Endothelial cell of umbilical vein (primary cell): ENCODE measurements at regions of chr19 and their contacts with region 1.

Region 1: DNA sequence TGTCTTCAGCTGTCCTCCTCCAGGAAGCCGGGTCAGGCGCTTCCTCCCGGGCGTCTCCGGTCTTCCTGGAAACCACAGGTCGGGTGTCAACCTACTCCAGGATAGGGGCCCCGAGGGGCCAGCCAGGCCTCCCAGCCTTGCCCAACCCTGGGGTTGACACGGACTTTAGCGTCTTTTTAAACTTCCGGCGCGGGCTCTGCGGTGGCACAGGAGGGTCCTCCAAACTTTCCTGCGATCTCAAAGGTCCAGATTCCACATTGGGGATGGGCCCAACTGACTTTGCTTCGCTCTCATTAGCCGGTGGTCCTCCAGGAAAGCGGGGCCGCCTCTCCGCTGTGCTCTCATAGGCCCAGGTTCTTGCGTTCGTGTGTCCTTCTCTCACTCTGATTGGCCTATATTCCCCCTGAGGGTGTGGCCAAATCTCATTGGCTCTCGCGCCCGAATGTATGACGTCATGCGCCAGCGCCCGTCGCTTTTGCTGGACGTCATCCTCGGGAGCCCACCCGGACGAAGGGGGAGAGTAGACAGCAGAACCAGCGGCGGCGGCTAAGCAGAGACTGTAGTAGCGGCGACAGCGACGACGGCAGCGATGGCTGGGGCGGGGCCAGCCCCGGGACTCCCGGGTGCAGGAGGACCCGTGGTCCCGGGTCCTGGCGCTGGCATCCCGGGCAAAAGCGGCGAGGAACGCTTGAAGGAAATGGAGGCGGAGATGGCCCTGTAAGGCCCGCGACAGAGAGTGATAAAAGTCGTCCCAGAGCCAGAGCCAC is at the start of gene RBM42:
- DNase-seq: peak; percentile 99
- H3K4me3 ChIP-seq: peak within 1 kb of the TSS; percentile 70 to 98 (median 76)
- H3K27ac ChIP-seq: peak within 1 kb of the TSS; percentile 53
- H3K4me1 ChIP-seq: peaks cover 10% of the 10 kb centered on the region
- H3K27me3 ChIP-seq: no peaks in the 10 kb centered on the region
- CTCF ChIP-seq: no peak
- POLR2A ChIP-seq: peak; percentile 33
- total RNA-seq, gene RBM42: 97.3 and 99.2 TPM in 2 replicates

Region 2: GRCh38 chr19:35612559-35613321 is 16.0 kb before region 1 on chr19 and contains the start of gene HAUS5:
- CTCF ChIA-PET with region 1: no interaction called
- POLR2A ChIA-PET with region 1: no interaction called
- dilution Hi-C with region 1: no loop called
- intact Hi-C with region 1: loop called (anchors 1 kb)
- DNase-seq: peak; percentile 94
- H3K4me3 ChIP-seq: peak within 1 kb of the TSS; percentile 76 to 86 (median 84)
- H3K27ac ChIP-seq: peak within 1 kb of the TSS; percentile 70
- H3K4me1 ChIP-seq: peaks cover 3% of the 10 kb centered on the region
- H3K27me3 ChIP-seq: no peaks in the 10 kb centered on the region
- CTCF ChIP-seq: no peak
- POLR2A ChIP-seq: peak; percentile 65
- total RNA-seq, gene HAUS5: 17.5 and 19.0 TPM in 2 replicates